G401 (cell line): ENCODE measurements at regions of chr2 and their contacts with region 1.

Region 1: DNA sequence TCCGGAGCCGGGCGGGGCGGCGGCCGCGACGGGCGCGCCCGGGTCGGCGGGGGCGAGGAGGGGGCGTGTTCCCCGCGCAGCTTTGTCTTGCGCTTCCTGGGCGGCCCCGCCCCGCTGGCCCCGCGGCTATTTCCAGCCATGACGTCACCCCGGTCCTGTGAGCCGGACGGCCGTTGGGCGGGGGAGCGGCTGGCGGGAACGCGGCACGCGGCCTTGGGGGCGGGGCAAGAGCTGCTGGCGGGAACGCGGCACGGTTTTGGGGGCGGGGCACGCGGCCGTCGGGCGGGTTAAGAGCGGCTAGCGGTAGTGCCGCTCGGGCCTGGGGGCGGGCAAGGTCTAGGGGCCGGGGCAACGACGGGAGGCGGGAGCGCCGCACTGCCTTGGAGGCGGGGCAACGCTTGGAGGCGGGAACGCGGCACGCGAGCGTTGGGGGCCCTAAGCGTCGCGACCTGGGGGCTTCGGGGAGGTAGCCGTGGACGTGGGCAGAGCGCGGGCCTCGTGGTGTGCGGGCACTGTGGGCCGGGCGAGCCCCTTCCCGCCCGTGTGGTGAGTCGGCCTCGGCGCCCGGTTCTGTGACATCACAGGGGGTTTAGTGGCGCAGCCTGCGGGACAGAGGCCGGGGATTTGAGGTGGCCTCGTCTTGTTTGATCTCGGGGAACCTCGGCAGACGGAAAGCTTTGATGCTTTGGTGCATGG is 704 bp downstream of the KLF11 start:
- DNase-seq: peak; percentile 91

Region 2: DNA sequence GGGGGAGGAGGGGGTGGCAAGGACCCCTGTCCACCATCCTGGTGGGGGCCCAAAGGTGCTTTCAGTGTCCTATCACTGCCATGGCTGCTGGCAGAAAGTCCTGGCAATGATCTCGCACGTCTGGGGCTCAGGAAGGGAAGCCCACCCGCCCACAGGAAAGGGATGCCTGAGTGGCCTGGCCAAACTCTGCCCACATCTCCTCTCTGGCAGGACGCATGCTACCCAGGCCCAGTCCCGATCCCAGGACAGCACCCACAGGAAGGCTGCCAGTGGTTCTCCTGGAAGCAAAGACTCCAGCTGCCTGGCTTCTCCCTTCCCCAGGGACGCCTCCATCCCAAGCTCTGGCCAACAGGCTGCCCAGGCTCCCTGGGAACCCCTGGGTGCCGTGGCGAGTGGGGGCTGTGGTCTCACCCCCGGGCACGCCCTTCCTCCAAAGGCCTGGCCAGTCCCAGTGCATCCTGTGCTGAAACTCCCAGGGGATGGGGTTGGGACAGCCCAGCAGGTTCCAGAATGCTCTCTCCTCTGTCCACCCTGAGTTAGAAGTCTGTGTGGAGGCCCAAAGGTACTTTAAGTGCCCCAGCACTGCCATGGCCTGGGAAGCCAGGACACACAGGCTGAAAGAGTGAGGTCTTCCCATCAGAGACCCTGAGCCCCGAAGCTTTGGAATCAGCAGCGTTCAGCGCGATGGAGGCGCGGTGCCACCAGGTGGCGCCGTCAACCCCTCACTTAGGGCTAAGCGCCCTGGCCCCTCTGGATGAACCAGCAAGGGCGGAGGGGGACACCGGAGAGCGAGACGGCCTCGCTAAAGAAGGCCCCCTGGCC is 230.5 kb before region 1 on chr2:
- in situ Hi-C with region 1: loop called (anchors 10 kb)
- DNase-seq: peak; percentile 74